AG04450 (cell line): ENCODE measurements at regions of chr7 and their contacts with region 1.

Region 1: DNA sequence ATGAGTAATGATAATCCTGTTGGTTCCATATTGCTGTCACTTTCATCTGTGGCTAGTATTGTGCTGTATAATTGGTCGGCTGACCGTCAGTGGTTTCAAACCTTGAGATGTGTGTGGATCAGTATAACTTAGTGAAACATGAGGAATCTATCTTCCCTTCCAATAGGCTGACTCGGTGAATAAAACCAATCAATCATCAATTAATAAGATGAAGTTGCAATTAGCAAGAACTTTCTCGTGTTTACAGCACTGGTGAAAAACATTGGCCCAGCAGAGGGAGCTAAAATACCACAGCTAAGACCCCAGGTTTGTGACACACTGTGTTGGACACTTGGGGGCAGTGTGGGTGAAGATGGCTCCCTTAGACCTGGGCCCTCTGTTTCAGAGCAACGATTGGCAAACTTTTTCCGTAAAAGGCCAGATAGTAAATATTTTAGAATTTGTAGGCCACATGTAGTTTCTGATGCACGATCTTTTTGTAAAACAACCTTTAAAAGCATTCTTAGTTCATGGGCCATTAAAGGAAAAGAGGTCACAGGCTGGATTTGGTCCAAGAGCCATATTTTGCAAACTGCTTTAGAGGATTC is 47.8 kb downstream of the STRA8 start:
- DNase-seq: peak; percentile 75
- H3K4me3 ChIP-seq: no peak overlapping the region
- H3K27ac ChIP-seq: no peak overlapping the region
- H3K27me3 ChIP-seq: peaks cover 5% of the 10 kb centered on the region
- CTCF ChIP-seq: peak; percentile 99

Region 2: GRCh38 chr7:133873631-133874030 is 1407.8 kb before region 1 on chr7:
- CTCF ChIA-PET with region 1: no interaction called
- POLR2A ChIA-PET with region 1: no interaction called
- DNase-seq: no peak
- H3K4me3 ChIP-seq: no peak overlapping the region
- H3K27ac ChIP-seq: no peak overlapping the region
- H3K27me3 ChIP-seq: no peaks in the 10 kb centered on the region
- CTCF ChIP-seq: no peak

Region 3: DNA sequence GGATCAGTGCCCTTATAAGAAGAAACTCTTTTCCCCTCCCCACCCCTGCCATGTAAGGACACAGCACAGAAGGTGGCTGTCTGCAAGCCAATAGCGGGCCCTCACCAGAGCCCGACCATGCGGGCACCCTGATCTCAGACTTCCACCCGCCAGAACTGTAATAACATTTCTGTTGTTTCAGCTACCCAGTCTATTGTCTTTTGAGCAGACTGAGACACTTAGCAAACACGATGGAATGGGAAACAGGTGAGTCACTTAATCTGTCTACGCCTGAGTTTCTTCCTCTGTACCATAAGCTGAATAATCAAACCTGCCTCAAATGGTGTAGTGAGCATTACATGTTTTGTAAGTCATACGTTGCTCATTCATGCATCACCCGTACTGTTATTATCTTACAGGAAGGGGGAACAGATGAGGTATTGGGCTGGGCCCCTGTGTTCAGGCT is 10.4 kb after region 1 on chr7:
- CTCF ChIA-PET with region 1: interaction called, 10 read pairs
- POLR2A ChIA-PET with region 1: no interaction called
- DNase-seq: peak; percentile 18
- H3K4me3 ChIP-seq: no peak overlapping the region
- H3K27ac ChIP-seq: no peak overlapping the region
- H3K27me3 ChIP-seq: no peaks in the 10 kb centered on the region
- CTCF ChIP-seq: no peak

Region 4: DNA sequence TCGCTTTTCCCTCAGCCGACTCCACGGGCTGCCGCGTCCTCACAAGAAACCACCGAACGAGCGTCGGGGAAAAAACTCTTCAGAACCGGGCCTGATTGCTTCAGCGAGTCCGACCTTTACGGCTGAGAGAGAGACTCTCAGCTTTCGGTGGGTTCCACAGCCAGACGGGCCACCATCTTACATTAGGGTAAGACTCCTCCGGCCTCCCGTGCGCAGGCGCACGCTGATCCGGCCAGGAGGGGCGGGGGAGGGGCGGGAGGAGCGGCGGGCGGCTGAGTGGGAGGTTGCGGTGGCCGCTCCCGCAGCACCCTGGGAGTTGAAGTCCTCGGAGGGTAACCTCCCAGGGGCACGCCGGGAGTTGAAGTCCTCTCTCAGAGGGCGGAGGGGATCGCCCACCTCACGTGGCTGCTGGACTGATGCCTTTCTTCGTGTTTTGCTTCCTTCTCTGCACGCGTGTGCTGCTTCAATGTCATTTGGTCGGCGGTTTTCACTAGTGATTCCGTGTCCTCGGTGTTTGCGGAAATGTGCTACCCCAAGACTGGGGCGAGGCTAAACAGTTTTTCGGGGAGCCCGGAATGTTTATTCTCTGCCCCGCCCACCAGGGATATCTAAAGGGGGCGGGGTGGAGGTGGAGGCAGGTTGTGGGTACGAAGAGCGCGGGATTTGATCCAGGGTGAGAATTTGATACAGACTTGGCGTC is 228.6 kb after region 1 on chr7 and contains the start of gene CNOT4:
- CTCF ChIA-PET with region 1: interaction called, 12 read pairs
- POLR2A ChIA-PET with region 1: no interaction called
- DNase-seq: peak; percentile 85
- H3K4me3 ChIP-seq: peak within 1 kb of the TSS; percentile 96
- H3K27ac ChIP-seq: peak within 1 kb of the TSS; percentile 96
- H3K27me3 ChIP-seq: no peaks in the 10 kb centered on the region
- CTCF ChIP-seq: no peak
- polyA plus RNA-seq, gene CNOT4: 15.8 and 17.0 TPM in 2 replicates

Region 5: GRCh38 chr7:135558337-135558767 is 276.9 kb after region 1 on chr7:
- CTCF ChIA-PET with region 1: interaction called, 55 read pairs
- POLR2A ChIA-PET with region 1: no interaction called
- DNase-seq: peak; percentile 1
- H3K4me3 ChIP-seq: peak overlapping the region; percentile 75
- H3K27ac ChIP-seq: peak overlapping the region; percentile 92
- H3K27me3 ChIP-seq: peaks cover 2% of the 10 kb centered on the region
- CTCF ChIP-seq: peak; percentile 69

Region 6: GRCh38 chr7:135602304-135602703 is 320.8 kb after region 1 on chr7:
- CTCF ChIA-PET with region 1: interaction called, 11 read pairs
- POLR2A ChIA-PET with region 1: no interaction called
- DNase-seq: no peak
- H3K4me3 ChIP-seq: no peak overlapping the region
- H3K27ac ChIP-seq: no peak overlapping the region
- H3K27me3 ChIP-seq: no peaks in the 10 kb centered on the region
- CTCF ChIP-seq: no peak